ENCODE measurements at regions of chr18 and their contacts with region 1.

Region 1: DNA sequence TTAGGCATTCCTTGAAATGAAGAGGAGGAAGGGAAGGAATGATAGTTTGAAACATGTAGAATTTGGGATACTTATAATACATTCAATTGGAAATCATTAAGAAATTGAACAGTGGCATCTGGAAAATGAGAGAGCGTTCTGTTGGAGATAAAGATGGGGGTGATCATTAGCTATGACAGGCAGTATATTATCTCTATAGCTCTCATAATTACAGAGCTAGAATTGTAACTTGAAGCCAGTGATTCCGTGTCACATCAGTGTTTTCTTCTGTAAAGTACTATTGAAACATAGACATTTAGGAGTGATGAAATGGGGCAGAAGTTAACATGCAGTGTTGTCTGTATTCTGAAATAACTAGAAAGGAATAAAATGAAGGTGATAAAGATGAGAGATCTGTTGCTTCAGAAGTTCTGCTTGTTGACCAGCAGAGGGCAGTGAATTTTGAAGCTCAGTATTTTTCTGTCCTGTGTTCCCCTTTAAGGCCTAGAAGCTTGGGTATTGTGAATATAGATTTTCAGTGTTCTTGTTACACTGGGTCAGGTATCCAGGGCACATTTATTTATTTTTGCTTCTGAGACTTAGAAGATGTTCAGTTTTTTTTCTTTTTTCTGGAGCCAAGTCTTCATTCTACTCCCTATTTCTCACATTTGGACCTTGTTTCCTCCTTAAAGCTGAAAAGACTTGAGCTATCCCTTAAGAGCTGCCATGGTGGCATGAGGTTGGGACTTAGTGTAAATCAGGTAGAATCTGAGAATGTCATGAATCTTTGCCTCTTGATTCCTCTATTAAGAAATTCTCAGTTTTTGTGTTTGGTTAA is 157.4 kb downstream of the TAF4B start:
- DNase-seq: peak; percentile 52
- H3K4me3 ChIP-seq: no peak overlapping the region
- H3K27ac ChIP-seq: no peak overlapping the region
- H3K4me1 ChIP-seq: peaks cover 12% of the 10 kb centered on the region
- H3K27me3 ChIP-seq: no peaks in the 10 kb centered on the region
- CTCF ChIP-seq: peak; percentile 55 to 57
- POLR2A ChIP-seq: no peak

Region 2: DNA sequence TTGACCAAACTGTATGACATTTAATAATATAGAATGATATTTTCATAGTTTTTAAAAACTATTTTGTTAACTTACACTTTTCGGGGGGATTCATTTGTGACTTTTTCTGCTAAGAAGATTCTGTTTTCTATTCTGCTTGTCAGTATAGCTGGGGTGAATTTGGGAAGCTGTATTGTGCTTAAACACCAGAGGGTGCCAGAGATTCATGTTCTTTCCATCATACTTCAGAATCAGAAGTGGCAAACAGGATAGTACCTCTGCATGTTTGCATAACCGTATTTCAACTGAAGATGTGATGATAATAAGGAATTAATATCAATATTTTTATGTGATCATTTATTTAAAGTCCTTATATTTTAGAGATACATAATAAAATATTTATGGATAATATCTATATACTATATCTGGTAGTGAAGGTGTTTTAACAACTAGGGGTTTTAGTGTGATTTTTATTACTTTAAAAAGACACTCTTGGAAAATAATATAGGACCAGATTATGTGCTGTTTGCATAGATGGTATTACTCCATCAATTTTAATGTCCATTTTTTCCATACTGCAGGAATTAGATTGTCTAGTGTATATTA is 76.4 kb before region 1 on chr18:
- CTCF ChIA-PET with region 1: interaction called, 17 read pairs
- POLR2A ChIA-PET with region 1: no interaction called
- dilution Hi-C with region 1: no loop called
- intact Hi-C with region 1: no loop called
- DNase-seq: peak; percentile 70
- H3K4me3 ChIP-seq: no peak overlapping the region
- H3K27ac ChIP-seq: no peak overlapping the region
- H3K4me1 ChIP-seq: peaks cover 3% of the 10 kb centered on the region
- H3K27me3 ChIP-seq: no peaks in the 10 kb centered on the region
- CTCF ChIP-seq: peak; percentile 43 to 57
- POLR2A ChIP-seq: no peak

Region 3: DNA sequence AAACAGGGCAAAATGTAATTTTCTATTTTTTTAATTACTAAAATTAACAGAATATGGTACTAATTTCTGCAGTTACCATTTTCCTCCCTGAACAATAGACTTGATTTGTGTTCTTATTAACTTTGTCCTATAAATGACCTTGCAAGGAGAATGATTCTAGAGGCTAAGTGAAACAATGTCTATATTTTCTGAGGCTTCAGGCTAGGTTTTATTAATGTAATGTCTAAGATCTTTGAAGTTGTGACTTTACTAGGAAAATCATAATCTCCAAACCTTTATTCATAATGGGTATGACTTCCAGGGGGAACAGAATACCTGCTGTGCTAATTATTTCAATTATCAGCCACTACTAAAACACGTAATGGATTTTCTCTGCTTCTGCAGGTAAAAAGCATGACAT is 63.0 kb before region 1 on chr18:
- CTCF ChIA-PET with region 1: no interaction called
- POLR2A ChIA-PET with region 1: no interaction called
- dilution Hi-C with region 1: no loop called
- intact Hi-C with region 1: no loop called
- DNase-seq: no peak
- H3K4me3 ChIP-seq: no peak overlapping the region
- H3K27ac ChIP-seq: no peak overlapping the region
- H3K4me1 ChIP-seq: no peaks in the 10 kb centered on the region
- H3K27me3 ChIP-seq: no peaks in the 10 kb centered on the region
- CTCF ChIP-seq: no peak
- POLR2A ChIP-seq: no peak

Region 4: DNA sequence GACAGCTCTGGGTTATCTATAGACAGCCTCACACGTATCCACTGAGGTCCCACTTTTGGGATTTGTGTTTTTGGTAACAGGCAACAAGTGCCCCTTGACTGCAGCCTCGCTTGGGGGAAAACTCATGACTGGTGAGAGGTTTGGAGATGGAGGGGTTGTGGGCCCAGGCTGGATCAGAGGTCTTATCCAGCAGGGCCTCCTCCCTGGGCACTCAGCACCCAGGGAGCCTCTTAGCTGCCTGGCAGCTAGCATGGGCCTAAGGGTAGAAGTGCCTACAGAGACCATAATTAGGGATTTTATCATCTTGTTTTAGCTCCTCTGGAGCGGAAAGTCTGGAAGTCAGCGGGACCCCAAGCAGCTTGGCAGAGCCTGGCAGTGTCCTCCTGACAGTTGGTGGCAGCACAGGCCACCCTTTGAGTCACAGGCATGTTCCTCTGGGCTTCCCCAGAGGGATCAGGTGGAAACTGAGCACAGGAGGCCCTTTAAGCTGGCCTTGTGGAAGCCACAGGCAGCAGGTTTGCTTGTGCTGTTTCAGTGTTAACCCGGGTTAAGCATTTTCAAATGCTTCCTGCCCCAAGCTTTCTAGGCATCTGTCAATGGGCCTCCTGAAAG is 21.6 kb after region 1 on chr18:
- CTCF ChIA-PET with region 1: interaction called, 21 read pairs
- POLR2A ChIA-PET with region 1: no interaction called
- dilution Hi-C with region 1: no loop called
- intact Hi-C with region 1: no loop called
- DNase-seq: peak; percentile 46
- H3K4me3 ChIP-seq: no peak overlapping the region
- H3K27ac ChIP-seq: no peak overlapping the region
- H3K4me1 ChIP-seq: no peaks in the 10 kb centered on the region
- H3K27me3 ChIP-seq: no peaks in the 10 kb centered on the region
- CTCF ChIP-seq: peak; percentile 35 to 53
- POLR2A ChIP-seq: no peak

Region 5: DNA sequence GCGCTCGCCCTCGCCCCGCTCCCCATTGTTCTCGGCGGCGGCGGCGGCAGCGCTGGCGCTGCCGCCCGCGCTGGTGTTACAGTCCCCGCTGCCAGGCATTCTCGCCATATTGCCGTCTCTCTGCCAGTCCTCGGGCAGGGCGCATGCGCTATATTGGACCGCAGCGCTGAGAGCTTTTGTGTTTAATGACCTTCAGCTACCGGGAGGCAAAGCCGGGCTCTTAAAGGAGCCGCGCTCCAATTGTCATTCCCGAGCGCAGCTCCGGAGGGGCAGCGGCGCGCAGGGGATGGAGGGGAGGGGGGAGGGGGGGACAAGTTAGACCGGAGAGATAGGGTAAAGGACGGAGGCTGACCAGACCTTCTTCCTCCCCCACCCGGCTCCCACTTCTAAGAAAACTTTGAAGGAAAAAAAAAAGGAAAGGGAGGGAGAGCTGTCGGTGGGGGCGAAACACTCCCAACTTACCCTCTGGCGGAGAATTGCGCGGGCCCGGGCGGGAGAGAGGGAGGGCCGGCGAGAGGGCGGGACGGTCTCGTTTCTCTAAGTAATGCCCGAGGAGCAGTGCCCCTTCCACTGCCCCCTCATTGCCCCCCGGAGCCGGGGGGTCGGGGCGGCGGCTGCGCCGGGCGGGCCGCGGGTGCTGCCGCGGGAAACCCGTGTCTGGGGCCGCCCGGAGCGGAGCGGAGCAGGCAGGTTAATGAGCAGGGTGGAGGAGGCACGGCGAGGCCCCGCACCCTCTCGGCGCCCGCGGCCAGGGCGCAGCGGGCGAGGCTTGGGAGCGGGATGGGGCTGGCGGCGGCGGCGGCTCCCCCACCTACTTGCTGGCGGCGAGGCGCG is 165.0 kb after region 1 on chr18 and contains the start of gene KCTD1:
- CTCF ChIA-PET with region 1: interaction called, 89 read pairs
- POLR2A ChIA-PET with region 1: no interaction called
- dilution Hi-C with region 1: no loop called
- intact Hi-C with region 1: loop called (anchors 1 kb)
- DNase-seq: peak; percentile 79
- H3K4me3 ChIP-seq: peak within 1 kb of the TSS; percentile 48 to 64 (median 58)
- H3K27ac ChIP-seq: no peak within 1 kb of the TSS
- H3K4me1 ChIP-seq: peaks cover 31% of the 10 kb centered on the region
- H3K27me3 ChIP-seq: peaks cover 28 to 38% of the 10 kb centered on the region in 2 experiments
- CTCF ChIP-seq: no peak
- POLR2A ChIP-seq: no peak
- total RNA-seq, gene KCTD1: 12.1 and 13.3 TPM in 2 replicates

Region 6: GRCh38 chr18:26621161-26622026 is 237.7 kb after region 1 on chr18:
- CTCF ChIA-PET with region 1: interaction called, 14 read pairs
- POLR2A ChIA-PET with region 1: no interaction called
- dilution Hi-C with region 1: no loop called
- intact Hi-C with region 1: no loop called
- DNase-seq: peak; percentile 15
- H3K4me3 ChIP-seq: no peak overlapping the region
- H3K27ac ChIP-seq: no peak overlapping the region
- H3K4me1 ChIP-seq: no peaks in the 10 kb centered on the region
- H3K27me3 ChIP-seq: no peaks in the 10 kb centered on the region
- CTCF ChIP-seq: peak; percentile 31 to 56
- POLR2A ChIP-seq: no peak

Region 7: DNA sequence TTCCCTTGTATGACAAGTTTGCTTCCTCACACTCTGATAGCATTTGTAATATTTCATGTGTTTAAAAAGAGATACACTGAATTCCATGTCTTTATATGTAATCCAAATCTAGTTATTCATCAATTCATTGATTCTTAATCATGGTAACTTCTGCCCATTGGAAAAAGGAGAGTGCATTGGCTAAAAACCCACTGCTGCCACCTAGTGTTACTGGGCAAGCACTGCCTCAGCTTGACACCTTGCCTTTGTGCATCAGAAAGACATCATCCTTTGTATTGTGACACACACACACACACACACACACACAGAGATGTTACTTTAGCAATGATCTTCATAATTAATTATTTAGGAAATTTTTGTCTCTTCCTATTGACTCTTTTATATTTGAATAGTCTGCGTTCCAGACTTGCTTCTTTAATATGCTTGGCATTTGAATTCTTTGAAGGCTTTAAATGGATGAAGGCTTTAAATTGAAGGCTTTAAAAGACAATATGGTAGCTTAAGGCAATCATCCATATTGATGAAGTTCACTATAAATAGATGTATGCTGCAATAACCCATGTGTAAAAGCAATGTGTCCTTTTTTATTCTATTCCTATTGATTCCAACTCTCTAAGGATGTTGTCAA is 1215.7 kb after region 1 on chr18:
- CTCF ChIA-PET with region 1: interaction called, 16 read pairs
- POLR2A ChIA-PET with region 1: no interaction called
- dilution Hi-C with region 1: no loop called
- intact Hi-C with region 1: loop called (anchors 1 kb)
- DNase-seq: peak; percentile 33
- H3K4me3 ChIP-seq: no peak overlapping the region
- H3K27ac ChIP-seq: no peak overlapping the region
- H3K4me1 ChIP-seq: no peaks in the 10 kb centered on the region
- H3K27me3 ChIP-seq: peaks cover 0 to 2% of the 10 kb centered on the region in 2 experiments
- CTCF ChIP-seq: peak; percentile 84 to 86
- POLR2A ChIP-seq: no peak

Measured in endothelial cell of umbilical vein (primary cell).